Right cardiac atrium (tissue), 5 donors: ENCODE measurements at regions of chr1 and their contacts with region 1.

Region 1: DNA sequence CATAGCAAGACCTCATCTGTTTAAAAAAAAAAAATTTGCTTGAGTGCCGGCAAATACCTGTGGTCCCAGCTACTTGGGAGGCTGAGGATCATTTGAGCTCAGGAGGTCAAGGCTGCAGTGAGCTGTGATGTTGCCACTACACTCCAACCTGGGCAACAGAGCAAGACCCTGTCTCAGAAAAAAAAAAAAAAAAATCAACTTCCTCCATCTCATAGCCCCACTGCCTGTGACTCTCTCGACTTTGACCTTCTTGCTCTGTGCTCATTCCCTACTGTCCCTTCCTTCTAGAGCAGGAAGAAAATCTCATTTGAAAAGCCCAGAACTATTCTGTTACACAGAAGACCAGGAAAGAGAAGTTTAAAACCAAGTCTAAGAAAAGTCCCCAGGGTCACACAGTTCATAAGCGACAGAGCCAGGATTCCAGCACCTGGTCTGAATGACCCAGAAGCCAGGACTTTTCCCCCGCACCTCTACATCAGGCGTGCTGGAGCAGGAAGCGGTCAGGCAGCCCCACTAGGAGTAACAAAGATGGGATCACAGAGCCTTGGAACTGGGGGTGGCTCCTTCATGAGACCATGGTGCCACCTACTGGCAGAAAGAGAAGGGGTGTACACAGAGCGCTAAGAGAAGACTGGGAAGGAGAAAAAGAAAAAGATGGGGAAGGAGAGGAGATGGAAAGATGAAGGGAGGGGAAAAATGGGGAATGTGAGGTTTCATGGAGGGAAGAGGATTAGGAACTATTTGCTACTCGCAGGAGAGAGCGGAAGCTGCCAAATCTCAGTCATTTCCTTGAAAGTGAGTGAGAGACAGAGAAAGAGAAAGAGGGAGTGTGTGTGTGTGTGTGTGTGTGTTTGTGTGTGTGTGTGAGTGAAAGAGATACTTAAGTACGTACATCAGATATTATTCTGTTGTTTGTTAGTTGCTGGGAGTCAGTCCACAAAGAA is 3.1 kb upstream of the P3R3URF start:
- DNase-seq: peak; percentile 75 to 88 (median 81)
- ATAC-seq: peak; percentile 82 to 84
- H3K4me3 ChIP-seq: no peak overlapping the region
- H3K27ac ChIP-seq: peak overlapping the region; percentile 7
- H3K4me1 ChIP-seq: peaks cover 16% of the 10 kb centered on the region
- H3K27me3 ChIP-seq: no peaks in the 10 kb centered on the region

Region 2: DNA sequence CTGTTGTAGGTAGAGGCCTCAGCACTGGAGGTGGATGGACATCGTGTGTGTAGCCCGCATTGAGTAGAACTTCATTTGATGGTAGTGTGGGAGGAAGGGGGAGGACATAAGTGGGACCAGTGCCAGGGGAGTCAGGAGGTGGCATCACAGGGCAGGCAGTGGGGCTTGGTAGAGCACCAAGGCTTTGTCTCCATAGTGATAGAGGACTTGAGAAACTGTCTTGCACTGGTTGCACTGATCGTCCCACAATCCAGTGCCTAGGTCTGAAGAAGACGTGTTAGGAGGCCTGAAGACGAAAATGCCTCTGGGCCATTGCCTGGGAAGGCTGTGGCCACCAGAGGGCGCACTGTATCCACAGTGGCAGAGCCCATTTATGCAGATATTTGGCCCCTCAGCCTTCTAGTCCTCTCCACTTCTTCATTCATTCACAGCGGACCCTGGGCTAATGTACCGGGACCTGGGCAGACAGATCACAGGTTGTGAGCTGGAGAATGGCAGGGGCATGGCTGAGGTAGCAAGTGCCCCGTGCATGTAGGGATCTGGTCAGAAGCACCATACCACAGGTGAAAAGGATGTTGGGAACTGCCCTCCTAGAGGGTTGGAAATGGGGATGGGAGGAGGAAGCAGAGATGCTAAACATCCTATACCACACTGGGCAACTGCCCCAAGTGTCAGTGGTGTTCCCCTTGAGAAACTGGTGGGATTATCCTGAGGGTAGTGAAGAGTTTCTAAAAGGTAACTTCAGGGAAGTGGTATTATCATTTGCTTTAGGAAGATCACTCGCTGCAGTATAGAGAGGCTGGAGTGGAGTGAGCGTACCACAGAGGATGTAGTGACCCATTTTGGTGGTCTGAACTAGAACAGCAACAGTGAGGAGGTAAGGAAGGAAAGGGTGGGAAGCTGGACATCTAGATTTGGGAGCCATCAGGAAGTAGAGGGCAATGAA is 142.2 kb before region 1 on chr1:
- intact Hi-C with region 1: loop called (anchors 2 to 5 kb)
- DNase-seq: peak; percentile 85 to 96 (median 94)
- ATAC-seq: peak; percentile 55 to 64
- H3K4me3 ChIP-seq: no peak overlapping the region
- H3K27ac ChIP-seq: no peak overlapping the region
- H3K4me1 ChIP-seq: peaks cover 16% of the 10 kb centered on the region
- H3K27me3 ChIP-seq: no peaks in the 10 kb centered on the region

Region 3: DNA sequence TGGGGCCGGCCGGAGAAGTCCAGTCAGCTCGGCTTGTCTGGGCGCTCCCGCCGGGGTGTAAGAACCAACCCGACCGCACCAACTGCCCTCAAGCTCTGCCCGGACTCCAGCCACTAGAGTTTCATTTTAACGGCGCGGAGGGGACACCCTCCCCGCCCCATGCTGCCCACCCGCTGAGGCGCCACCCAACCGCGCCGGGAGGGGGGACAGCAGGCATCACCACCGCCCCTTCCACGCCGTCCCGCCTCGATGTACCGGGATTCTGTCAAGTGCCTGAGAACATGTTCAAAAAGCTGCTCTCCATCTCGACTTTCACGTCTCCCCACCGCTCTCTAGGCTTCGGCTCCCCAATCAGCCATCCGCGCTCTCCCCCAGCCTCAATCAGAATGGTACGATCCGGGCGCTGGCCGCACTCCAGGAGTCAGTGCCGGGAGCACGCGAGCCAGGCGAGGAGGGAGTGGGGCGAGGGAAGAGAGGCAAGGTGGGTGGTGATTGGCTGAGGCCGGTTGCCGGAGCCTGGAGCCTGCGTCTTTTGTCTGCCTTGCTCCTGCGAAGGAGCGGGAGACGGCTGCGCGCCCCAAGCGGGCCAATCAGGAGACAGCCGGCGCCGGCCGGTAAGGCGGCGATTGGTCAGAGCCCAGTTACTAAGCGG is 46.8 kb before region 1 on chr1 and contains the start of gene PIK3R3:
- intact Hi-C with region 1: loop called in 3 of 4 experiments (anchors 5 to 10 kb)
- DNase-seq: peak; percentile 98 to 99 (median 99)
- ATAC-seq: peak; percentile 99
- H3K4me3 ChIP-seq: peak within 1 kb of the TSS; percentile 99
- H3K27ac ChIP-seq: peak within 1 kb of the TSS; percentile 96
- H3K4me1 ChIP-seq: peaks cover 9% of the 10 kb centered on the region
- H3K27me3 ChIP-seq: no peaks in the 10 kb centered on the region
- total RNA-seq, gene PIK3R3: 30.5 to 49.8 (median 38.7) TPM

Region 4: GRCh38 chr1:46223472-46223943 is 44.1 kb after region 1 on chr1:
- intact Hi-C with region 1: loop called in 1 of 4 experiments (anchors 2 kb)
- DNase-seq: peak; percentile 59 to 79 (median 65)
- ATAC-seq: peak; percentile 88
- H3K4me3 ChIP-seq: no peak overlapping the region
- H3K27ac ChIP-seq: no peak overlapping the region
- H3K4me1 ChIP-seq: no peaks in the 10 kb centered on the region
- H3K27me3 ChIP-seq: no peaks in the 10 kb centered on the region